Endothelial cell of umbilical vein (primary cell): ENCODE measurements at regions of chr7 and their contacts with region 1.

Region 1: GRCh38 chr7:6272481-6273323 is at the start of gene CYTH3:
- DNase-seq: peak; percentile 79
- H3K4me3 ChIP-seq: peak within 1 kb of the TSS; percentile 66 to 87 (median 69)
- H3K27ac ChIP-seq: no peak within 1 kb of the TSS
- H3K4me1 ChIP-seq: peaks cover 9% of the 10 kb centered on the region
- H3K27me3 ChIP-seq: peaks cover 3% of the 10 kb centered on the region in 2 experiments
- CTCF ChIP-seq: no peak
- POLR2A ChIP-seq: peak; percentile 77
- total RNA-seq, gene CYTH3: 11.1 and 11.2 TPM in 2 replicates

Region 2: DNA sequence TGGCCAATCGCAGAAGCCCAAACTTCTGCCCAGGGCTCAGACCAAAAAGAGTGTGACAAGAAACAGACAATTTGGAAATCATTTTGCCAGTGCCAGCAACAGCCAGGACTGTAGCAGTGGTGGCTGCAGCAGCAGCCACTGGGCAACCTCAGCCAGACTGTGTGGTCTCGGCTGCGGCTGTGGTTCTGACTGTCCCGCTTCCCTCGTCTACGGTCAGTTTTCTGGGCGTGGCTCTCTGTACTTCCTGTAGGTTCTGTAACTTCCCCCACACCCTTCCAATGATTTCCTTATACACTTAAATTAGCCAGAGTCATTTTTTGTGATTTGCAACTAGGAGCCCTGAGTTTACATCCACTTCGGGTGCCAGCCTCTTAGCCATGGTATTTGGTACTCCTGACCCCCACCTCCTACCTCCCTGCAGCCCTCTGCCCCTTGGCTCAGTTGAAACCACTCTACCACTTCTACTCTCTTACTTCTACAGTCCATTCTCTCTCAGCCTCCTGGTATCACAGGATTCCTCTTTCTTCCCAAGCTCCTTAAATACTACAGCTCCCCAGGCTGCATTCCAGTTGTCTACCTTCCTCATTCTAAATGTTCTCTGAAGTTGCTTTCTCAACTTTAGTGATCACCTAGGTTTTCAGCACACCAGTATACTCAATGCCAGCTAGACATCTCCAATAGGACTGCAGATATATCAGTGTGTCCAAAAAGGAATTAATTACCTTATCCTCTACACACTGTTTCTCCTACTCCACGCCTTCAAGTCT is 40.0 kb before region 1 on chr7:
- CTCF ChIA-PET with region 1: interaction called, 4 read pairs
- POLR2A ChIA-PET with region 1: no interaction called
- dilution Hi-C with region 1: no loop called
- intact Hi-C with region 1: loop called (anchors 5 kb)
- DNase-seq: peak; percentile 12
- H3K4me3 ChIP-seq: no peak overlapping the region
- H3K27ac ChIP-seq: no peak overlapping the region
- H3K4me1 ChIP-seq: peaks cover 9% of the 10 kb centered on the region
- H3K27me3 ChIP-seq: no peaks in the 10 kb centered on the region
- CTCF ChIP-seq: no peak
- POLR2A ChIP-seq: no peak

Region 3: GRCh38 chr7:6250364-6250833 is 22.3 kb before region 1 on chr7:
- CTCF ChIA-PET with region 1: interaction called, 3 read pairs
- POLR2A ChIA-PET with region 1: no interaction called
- dilution Hi-C with region 1: no loop called
- intact Hi-C with region 1: loop called (anchors 1 kb)
- DNase-seq: no peak
- H3K4me3 ChIP-seq: no peak overlapping the region
- H3K27ac ChIP-seq: no peak overlapping the region
- H3K4me1 ChIP-seq: peaks cover 18% of the 10 kb centered on the region
- H3K27me3 ChIP-seq: no peaks in the 10 kb centered on the region
- CTCF ChIP-seq: no peak
- POLR2A ChIP-seq: no peak

Region 4: DNA sequence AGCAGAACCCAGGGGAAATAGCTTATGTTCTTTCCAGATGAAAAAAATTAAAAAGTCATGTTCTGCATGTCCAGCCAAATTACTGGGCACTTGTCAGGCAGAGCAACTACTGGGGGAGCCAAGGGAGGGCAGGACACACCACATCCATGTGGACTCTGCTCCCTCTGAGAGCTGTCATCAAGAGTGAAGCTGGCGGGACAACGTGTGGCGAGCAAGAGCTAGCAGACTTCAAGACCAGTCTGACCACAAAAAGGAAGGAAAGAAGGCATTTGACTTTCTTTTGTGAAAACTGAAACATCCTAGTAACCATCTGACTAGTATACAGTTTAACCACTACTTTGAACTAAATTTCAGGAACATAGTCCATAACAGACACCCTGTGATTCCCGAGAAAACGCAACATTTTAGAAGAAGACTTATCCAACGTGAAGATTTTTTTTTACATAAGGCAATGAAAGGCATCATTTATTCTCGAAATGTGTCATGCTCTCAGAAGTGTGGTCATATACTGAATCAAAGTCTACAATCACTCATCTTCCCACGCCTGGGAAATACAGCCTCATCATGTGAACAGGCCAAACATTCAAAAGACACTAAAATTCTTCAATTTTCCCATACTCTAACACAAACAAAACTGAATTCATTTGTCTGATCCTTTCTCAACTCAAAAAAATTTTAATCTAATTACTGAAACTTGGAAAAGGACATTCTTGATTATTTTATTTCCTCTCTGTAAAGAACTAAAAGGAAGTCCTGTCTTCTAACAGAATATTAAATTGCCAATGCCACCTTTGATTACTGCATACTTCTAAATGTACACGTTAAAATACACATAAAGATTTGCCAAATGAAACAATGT is 15.8 kb before region 1 on chr7:
- CTCF ChIA-PET with region 1: interaction called, 8 read pairs
- POLR2A ChIA-PET with region 1: no interaction called
- dilution Hi-C with region 1: no loop called
- intact Hi-C with region 1: loop called (anchors 1 kb)
- DNase-seq: no peak
- H3K4me3 ChIP-seq: no peak overlapping the region
- H3K27ac ChIP-seq: no peak overlapping the region
- H3K4me1 ChIP-seq: peaks cover 11% of the 10 kb centered on the region
- H3K27me3 ChIP-seq: no peaks in the 10 kb centered on the region
- CTCF ChIP-seq: no peak
- POLR2A ChIP-seq: no peak